ENCODE measurements at regions of chr3 and their contacts with region 1.

Region 1: GRCh38 chr3:39501968-39502837 is 34.7 kb downstream of the MOBP start:
- DNase-seq: peak; percentile 20
- H3K4me3 ChIP-seq: peak overlapping the region in 3 of 4 donors; percentile 25 to 38 (median 35)
- H3K27ac ChIP-seq: peak overlapping the region in 2 of 4 donors; percentile 50 to 62
- H3K4me1 ChIP-seq: peaks cover 0 to 10% (median 4%) of the 10 kb centered on the region in 4 donors
- H3K27me3 ChIP-seq: peaks cover 12% of the 10 kb centered on the region
- CTCF ChIP-seq: no peak
- EP300 ChIP-seq: no peak
- POLR2A ChIP-seq: no peak

Region 2: DNA sequence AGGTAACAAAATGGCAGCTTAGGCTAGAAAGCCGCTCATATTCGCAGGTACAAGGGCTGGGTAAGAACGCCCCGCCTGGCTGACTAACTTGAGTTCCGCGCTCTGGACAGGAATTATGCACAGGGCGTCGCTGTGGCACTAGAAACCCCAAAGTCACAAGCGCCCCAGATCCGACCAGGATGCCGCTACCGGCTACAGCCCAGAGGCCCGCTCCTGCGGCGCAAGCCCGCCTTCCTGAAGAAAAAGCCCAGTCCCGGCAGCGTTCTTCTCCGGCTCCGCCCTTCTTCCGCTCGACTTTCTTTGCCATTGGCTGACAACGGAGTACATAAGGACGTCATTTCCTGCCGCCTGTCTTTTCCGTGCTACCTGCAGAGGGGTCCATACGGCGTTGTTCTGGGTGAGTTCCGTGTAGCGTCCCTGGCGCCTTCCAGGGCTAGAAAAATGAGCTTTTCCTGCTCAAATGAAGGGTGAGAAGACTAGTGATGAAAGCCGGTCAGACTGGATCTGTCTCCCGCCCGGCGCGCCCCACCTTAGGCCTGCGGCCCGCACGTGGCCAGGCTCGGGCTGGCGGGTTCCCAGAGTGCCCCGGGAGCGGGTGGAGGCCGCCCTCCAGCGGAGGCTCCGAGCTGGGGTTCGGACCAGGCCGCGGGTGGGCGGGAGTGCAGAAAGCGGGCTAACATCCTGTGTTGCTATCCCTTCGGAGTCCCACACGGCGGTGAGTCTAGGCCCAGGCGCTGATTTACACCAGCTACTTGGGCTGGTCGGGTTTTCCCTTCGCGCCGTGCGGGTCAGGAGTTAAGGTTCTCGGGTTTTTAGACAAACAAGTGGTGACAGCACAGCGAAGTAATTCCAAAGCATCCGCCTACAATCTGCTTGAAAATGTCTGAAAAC is 95.6 kb before region 1 on chr3 and contains the start of gene RPSA:
- in situ Hi-C with region 1: no loop called
- intact Hi-C with region 1: no loop called
- DNase-seq: peak; percentile 97
- H3K4me3 ChIP-seq: peak within 1 kb of the TSS; percentile 59 to 78 (median 74)
- H3K27ac ChIP-seq: peak within 1 kb of the TSS; percentile 82 to 92 (median 89)
- H3K4me1 ChIP-seq: peaks cover 6 to 41% (median 21%) of the 10 kb centered on the region in 4 donors
- H3K27me3 ChIP-seq: no peaks in the 10 kb centered on the region
- CTCF ChIP-seq: peak; percentile 14 to 49 (median 20)
- EP300 ChIP-seq: no peak
- POLR2A ChIP-seq: peak; percentile 98
- total RNA-seq, gene RPSA: 460 to 1,003 (median 843) TPM

Region 3: DNA sequence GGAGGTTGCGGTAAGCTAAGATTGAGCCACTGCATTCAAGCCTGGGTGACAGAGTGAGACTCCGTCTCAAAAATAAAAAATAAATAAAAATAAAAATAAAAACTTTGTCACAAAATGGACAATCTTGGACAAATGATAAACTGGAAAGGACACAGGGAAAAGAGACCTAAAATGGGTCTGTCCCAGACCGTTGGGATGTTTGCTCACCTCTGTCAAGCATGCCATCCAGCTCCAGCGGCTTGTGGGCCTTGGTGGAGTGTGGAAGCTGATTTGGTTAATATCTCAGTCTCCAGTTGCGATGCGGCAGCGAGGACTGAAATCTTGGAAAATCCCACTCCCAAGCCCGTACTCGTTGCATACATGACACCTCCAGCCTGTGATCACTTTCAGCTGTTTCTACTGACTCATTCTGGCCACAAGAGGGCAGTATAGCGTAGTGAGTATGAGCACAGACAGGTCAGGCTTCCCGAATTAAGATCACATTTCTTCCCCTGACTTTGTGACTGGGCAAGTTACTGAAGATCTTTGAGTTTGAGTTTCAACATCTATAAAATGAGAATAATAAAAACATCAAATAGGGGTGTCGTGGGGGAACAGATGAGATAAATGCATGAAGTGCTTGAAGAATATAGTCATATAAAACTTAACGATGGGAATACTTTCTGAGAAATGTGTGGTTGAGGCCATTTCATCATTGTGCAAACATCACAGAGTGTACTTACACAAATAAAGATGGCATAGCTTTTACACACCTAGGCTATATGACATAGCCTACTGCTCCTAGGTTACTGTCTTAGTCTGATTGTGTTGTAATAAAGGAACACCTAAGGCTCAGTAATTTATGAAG is 54.3 kb before region 1 on chr3:
- in situ Hi-C with region 1: loop called in 2 of 4 experiments (anchors 10 kb)
- intact Hi-C with region 1: no loop called
- DNase-seq: peak; percentile 77
- H3K4me3 ChIP-seq: no peak overlapping the region
- H3K27ac ChIP-seq: peak overlapping the region; percentile 72 to 84 (median 75)
- H3K4me1 ChIP-seq: peaks cover 0 to 21% (median 10%) of the 10 kb centered on the region in 4 donors
- H3K27me3 ChIP-seq: no peaks in the 10 kb centered on the region
- CTCF ChIP-seq: peak; percentile 85 to 92 (median 87)
- EP300 ChIP-seq: no peak
- POLR2A ChIP-seq: no peak

Region 4: GRCh38 chr3:40109641-40110490 is 607.7 kb after region 1 on chr3:
- in situ Hi-C with region 1: no loop called
- intact Hi-C with region 1: no loop called
- DNase-seq: no peak
- H3K4me3 ChIP-seq: no peak overlapping the region
- H3K27ac ChIP-seq: no peak overlapping the region
- H3K4me1 ChIP-seq: no peaks in the 10 kb centered on the region
- H3K27me3 ChIP-seq: no peaks in the 10 kb centered on the region
- CTCF ChIP-seq: no peak
- EP300 ChIP-seq: no peak
- POLR2A ChIP-seq: no peak